Psoas muscle (tissue), 8 donors: ENCODE measurements at regions of chr19 and their contacts with region 1.

Region 1: DNA sequence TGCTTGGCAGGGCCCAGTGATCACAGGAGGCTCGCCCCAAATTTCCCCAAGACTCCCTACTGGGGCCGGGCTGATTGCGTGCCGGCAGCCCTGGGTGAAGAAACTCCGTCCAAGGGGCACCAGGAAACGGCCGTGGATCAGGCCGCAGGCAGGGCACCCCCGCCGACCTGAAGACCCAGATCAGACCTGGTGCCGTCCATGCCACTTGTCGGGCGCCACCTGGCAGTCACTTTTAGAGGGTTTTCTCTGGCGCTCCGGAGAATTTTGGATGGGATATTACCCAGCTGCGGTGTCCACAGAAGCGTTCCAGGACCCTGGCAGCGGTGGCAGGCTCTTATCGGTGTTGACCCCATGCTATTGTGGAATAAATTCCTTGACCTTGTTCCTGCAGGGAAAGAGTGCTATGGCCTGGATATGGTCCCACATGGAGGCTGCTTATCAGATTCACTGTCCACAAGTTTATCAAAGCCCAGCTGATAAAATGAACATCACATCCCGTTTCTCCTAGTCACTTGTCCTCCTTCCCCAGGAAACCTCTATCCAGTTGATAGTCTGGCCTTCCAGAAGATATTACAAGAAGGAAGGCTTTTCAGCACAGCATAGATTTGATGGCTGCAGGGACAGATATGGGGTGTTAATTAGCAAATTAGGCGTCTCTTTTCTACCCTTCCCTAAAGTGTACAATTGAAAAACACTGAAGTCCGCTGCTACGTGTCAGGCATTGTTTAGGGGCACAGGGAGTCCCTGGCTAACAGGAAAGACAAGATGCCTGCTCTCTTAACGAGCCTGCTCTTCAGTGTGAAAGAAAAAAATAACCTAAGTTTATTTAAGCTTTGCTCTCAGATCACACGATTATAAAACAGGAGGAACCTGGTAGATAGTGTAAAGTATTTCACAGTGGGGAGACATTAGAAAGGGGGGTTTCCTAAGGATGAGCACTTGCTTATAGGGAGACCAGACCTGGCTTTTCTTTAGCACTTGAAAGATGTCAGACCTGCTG is 38.4 kb downstream of the IGFL2 start:
- DNase-seq: no peak
- ATAC-seq: no peak
- H3K4me3 ChIP-seq: no peak overlapping the region
- H3K27ac ChIP-seq: no peak overlapping the region
- H3K4me1 ChIP-seq: no peaks in the 10 kb centered on the region
- H3K27me3 ChIP-seq: peaks cover 0 to 36% (median 7%) of the 10 kb centered on the region in 3 donors
- CTCF ChIP-seq: no peak

Region 2: DNA sequence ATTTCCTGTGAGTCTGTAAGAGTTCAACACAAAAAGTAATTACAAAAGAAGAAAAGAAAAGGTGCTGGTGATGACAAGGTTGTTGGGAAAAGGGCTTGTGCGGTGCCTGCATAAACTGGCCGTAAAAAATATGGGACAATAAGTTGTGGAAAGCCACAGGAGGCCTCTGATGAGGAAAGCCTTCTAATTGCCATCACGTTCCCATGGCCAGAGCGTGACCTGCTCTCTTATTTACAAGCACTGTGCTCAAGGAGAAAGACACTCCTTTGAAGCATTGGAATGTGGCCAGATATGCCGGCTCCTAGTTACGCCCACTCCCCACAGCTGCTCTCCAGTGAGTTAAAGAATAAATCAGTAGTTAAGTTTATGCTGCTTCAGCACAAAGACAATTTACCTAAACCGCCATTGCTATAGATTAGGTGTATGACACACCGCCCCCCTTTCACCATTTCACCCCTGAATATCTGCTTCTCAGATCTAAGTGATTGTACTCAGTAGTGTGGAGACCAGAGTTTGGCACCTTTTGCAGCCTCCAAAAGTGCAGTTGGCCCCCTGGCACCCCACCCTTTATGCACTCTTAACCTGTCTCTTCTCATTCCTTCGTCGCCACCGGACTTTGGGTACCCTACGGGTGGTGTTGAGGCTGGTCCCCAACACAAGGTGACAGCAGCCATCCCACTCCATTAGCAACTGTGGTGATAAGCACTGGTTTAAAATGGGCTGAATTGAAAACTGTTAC is 155.4 kb before region 1 on chr19:
- intact Hi-C with region 1: loop called in 1 of 2 experiments (anchors 2 kb)
- DNase-seq: no peak
- ATAC-seq: no peak
- H3K4me3 ChIP-seq: no peak overlapping the region
- H3K27ac ChIP-seq: no peak overlapping the region
- H3K4me1 ChIP-seq: no peaks in the 10 kb centered on the region
- H3K27me3 ChIP-seq: peaks cover 0 to 15% (median 2%) of the 10 kb centered on the region in 3 donors
- CTCF ChIP-seq: no peak

Region 3: GRCh38 chr19:46081928-46082727 is 104.3 kb before region 1 on chr19:
- intact Hi-C with region 1: loop called (anchors 1 to 5 kb)
- DNase-seq: no peak
- ATAC-seq: peak in 3 of 4 donors; percentile 53 to 65 (median 61)
- H3K4me3 ChIP-seq: no peak overlapping the region
- H3K27ac ChIP-seq: no peak overlapping the region
- H3K4me1 ChIP-seq: no peaks in the 10 kb centered on the region
- H3K27me3 ChIP-seq: peaks cover 7 to 51% (median 15%) of the 10 kb centered on the region in 3 donors
- CTCF ChIP-seq: peak; percentile 59

Region 4: DNA sequence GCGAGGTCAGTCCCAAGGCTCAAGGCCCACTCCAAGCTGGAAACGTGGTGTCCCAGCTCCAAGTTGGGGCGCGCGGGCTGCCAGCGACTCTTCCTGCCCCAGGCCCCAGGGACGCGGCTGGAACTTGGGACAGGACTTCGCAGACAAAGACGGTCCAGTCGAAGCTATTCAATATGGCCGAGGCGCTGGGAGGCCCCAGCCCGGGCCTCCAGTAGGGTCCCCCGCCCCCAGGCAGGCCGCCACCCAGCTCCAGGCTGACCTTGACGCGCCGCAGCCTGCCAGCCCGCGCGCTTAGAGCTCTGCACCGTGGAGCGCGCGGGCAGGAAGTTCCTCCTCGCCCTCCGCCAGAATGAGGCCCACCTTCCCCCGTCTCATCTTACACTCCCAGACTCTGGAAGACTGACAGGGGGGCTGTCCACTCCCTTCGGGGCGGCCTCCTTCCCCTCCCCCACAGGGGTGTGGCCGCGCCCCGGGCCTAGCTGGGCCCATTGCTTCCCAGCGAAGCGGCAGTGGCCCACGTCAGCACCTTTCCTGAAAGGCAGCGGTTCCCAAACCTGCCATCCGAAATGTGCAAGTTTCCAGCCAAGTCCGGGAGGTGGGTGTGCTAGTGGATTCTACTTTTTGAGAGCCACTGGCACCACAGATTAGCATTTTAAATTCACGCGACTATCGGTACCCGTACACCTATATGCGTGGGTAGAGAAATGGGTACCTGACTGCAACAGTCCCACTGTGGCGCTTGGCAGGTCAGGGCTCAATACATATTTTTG is 227.0 kb after region 1 on chr19 and contains the start of gene CCDC8:
- intact Hi-C with region 1: no loop called
- DNase-seq: peak; percentile 75 to 83
- ATAC-seq: peak; percentile 71 to 83 (median 78)
- H3K4me3 ChIP-seq: peak within 1 kb of the TSS; percentile 57
- H3K27ac ChIP-seq: peak within 1 kb of the TSS; percentile 16
- H3K4me1 ChIP-seq: no peaks in the 10 kb centered on the region
- H3K27me3 ChIP-seq: peaks cover 0 to 83% (median 29%) of the 10 kb centered on the region in 3 donors
- CTCF ChIP-seq: no peak
- total RNA-seq, gene CCDC8: 1.1 to 7.0 (median 2.4) TPM